ENCODE measurements at regions of chr1 and their contacts with region 1.

Region 1: GRCh38 chr1:108746372-108747205 is at the start of gene STXBP3:
- DNase-seq: peak; percentile 98 to 100
- ATAC-seq: peak; percentile 96 to 99 (median 98)
- H3K4me3 ChIP-seq: peak within 1 kb of the TSS; percentile 58 to 94 (median 82)
- H3K27ac ChIP-seq: peak within 1 kb of the TSS; percentile 86 to 99 (median 96)
- H3K4me1 ChIP-seq: peaks cover 0 to 25% (median 15%) of the 10 kb centered on the region in 9 donors
- H3K27me3 ChIP-seq: no peaks in the 10 kb centered on the region
- CTCF ChIP-seq: peak; percentile 85 to 99 (median 96)
- total RNA-seq, gene STXBP3: 18.1 to 34.4 (median 22.9) TPM

Region 2: GRCh38 chr1:108699375-108700332 is 46.9 kb before region 1 on chr1:
- intact Hi-C with region 1: loop called in 3 of 10 experiments (anchors 5 to 10 kb)
- DNase-seq: no peak
- ATAC-seq: peak in 1 of 8 donors; percentile 44
- H3K4me3 ChIP-seq: peak overlapping the region in 1 of 10 donors; percentile 12
- H3K27ac ChIP-seq: peak overlapping the region in 1 of 10 donors; percentile 71
- H3K4me1 ChIP-seq: peaks cover 0 to 48% (median 16%) of the 10 kb centered on the region in 9 donors
- H3K27me3 ChIP-seq: no peaks in the 10 kb centered on the region
- CTCF ChIP-seq: no peak

Region 3: GRCh38 chr1:108847494-108847893 is 100.9 kb after region 1 on chr1:
- intact Hi-C with region 1: no loop called
- DNase-seq: no peak
- ATAC-seq: no peak
- H3K4me3 ChIP-seq: no peak overlapping the region
- H3K27ac ChIP-seq: no peak overlapping the region
- H3K4me1 ChIP-seq: peaks cover 0 to 14% (median 0%) of the 10 kb centered on the region in 9 donors
- H3K27me3 ChIP-seq: peaks cover 0 to 2% (median 0%) of the 10 kb centered on the region in 7 donors
- CTCF ChIP-seq: no peak